ENCODE measurements at regions of chr9 and their contacts with region 1.

Region 1: DNA sequence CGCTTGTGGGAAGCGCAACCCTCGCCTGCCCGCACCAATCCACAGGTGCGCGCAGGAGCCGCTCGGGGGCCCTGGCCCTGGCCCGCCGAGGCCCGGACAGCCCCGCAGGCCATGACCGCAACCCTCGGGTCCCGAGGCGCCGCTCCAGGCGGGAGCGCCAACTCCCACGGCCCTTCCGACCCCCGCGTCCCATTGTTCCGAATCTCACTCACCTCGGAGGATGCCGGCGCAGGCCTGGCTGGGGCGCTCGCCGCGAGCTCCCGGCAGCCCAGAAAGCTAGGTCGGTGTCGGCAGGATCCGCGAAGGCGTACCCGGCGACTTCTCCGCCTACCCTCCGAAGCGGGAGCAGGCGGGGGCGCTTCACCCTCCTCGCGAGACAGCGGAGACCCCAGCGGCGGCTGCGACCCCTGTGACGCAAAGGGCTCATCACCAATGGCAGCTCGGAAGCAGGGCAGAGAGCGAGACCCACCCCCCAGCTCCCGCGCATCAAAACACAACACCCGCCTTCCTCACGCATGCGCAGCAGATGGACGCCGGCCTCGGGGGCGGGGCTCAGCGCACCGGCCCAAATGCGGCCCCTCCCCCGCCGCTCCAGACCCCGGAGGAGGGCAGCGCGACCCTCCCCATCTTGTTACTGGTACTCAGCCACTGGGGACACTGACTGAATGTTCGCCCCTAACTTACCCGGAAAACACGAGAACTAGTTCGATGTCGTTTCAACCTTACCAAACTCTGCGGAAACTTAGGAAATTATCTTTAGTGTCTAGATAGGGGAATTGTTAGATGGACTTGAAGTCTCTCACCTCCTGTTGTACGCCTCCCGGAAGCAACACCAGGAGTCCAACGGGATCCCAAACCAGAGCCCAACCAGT is 1.3 kb upstream of the SMIM27 start:
- DNase-seq: peak; percentile 92 to 98 (median 95)
- ATAC-seq: peak; percentile 80
- H3K4me3 ChIP-seq: peak overlapping the region; percentile 86
- H3K4me3 Mint-ChIP-seq: peak overlapping the region; percentile 95
- H3K27ac ChIP-seq: peak overlapping the region; percentile 96 to 97
- H3K27ac Mint-ChIP-seq: peak overlapping the region; percentile 99
- H3K4me1 ChIP-seq: peaks cover 30% of the 10 kb centered on the region
- H3K4me1 Mint-ChIP-seq: peaks cover 60% of the 10 kb centered on the region
- H3K27me3 ChIP-seq: no peaks in the 10 kb centered on the region
- H3K27me3 Mint-ChIP-seq: no peaks in the 10 kb centered on the region
- CTCF ChIP-seq: peak; percentile 50

Region 2: DNA sequence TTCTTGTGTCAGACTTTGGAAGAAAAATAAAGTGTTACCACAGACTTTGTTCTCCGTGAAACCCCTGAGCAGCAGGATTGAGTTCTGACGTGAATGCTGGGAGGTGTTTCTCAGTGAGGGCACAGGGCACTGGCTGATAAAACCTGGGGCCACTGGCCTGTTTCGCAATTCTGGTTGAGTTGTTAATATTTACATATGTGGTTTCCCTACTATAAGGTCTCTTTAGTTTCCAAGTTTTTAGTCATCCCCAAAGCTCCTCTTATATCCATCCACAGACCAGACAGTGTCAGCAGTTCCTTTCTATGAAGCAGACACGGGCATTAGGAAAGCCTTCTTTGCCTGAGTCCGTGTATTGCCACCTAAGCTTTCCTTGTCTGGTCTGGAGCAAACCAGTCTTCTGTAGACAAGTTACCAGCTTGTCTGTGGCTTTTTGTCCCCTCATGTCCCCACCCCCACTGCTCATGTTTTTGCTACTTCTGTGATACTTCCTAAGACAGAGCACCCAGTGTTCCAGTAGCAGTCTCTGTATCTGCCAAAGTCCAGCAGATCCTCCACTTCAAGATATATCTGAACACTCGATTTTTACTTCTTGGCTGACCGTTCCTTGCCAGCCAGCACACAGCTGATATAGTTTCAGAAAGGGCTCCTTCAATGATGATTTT is 124.4 kb before region 1 on chr9:
- CTCF ChIA-PET with region 1: no interaction called
- POLR2A ChIA-PET with region 1: no interaction called
- intact Hi-C with region 1: no loop called
- DNase-seq: no peak
- ATAC-seq: no peak
- H3K4me3 ChIP-seq: no peak overlapping the region
- H3K4me3 Mint-ChIP-seq: no peak overlapping the region
- H3K27ac ChIP-seq: no peak overlapping the region
- H3K27ac Mint-ChIP-seq: no peak overlapping the region
- H3K4me1 ChIP-seq: no peaks in the 10 kb centered on the region
- H3K4me1 Mint-ChIP-seq: no peaks in the 10 kb centered on the region
- H3K27me3 ChIP-seq: no peaks in the 10 kb centered on the region
- H3K27me3 Mint-ChIP-seq: no peaks in the 10 kb centered on the region
- CTCF ChIP-seq: no peak

Region 3: DNA sequence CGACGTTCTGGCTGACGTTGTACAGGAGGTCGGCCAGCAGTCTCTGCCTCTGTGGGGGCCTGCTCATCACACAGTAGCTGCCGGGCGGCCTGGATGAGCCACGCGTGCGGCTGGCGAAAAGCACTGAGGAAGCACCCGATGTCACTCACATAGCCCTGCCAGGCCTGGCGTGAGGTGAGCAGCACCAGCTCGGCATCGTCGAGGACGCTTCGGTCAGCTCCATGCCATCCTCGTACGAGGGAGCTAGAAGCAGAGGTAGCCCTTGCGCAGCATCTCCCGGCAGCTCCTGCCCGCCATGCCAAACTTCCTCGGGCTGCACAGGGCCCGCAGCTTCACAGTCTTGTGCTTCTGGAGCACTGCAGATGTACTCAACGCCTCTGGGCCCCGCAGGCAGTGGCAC is 16.0 kb after region 1 on chr9:
- CTCF ChIA-PET with region 1: interaction called, 45 read pairs
- POLR2A ChIA-PET with region 1: interaction called, 77 read pairs
- intact Hi-C with region 1: no loop called
- DNase-seq: no peak
- ATAC-seq: no peak
- H3K4me3 ChIP-seq: no peak overlapping the region
- H3K4me3 Mint-ChIP-seq: no peak overlapping the region
- H3K27ac ChIP-seq: no peak overlapping the region
- H3K27ac Mint-ChIP-seq: no peak overlapping the region
- H3K4me1 ChIP-seq: no peaks in the 10 kb centered on the region
- H3K4me1 Mint-ChIP-seq: peaks cover 28% of the 10 kb centered on the region
- H3K27me3 ChIP-seq: no peaks in the 10 kb centered on the region
- H3K27me3 Mint-ChIP-seq: no peaks in the 10 kb centered on the region
- CTCF ChIP-seq: no peak

Region 4: GRCh38 chr9:32571969-32572899 is 21.4 kb after region 1 on chr9:
- CTCF ChIA-PET with region 1: interaction called, 45 read pairs
- POLR2A ChIA-PET with region 1: interaction called, 77 read pairs
- intact Hi-C with region 1: loop called in 1 of 2 experiments (anchors 1 kb)
- DNase-seq: peak; percentile 44 to 92 (median 68)
- ATAC-seq: peak; percentile 84
- H3K4me3 ChIP-seq: peak overlapping the region; percentile 74
- H3K4me3 Mint-ChIP-seq: peak overlapping the region; percentile 99
- H3K27ac ChIP-seq: peak overlapping the region; percentile 74 to 87
- H3K27ac Mint-ChIP-seq: peak overlapping the region; percentile 97
- H3K4me1 ChIP-seq: peaks cover 5% of the 10 kb centered on the region
- H3K4me1 Mint-ChIP-seq: peaks cover 42% of the 10 kb centered on the region
- H3K27me3 ChIP-seq: no peaks in the 10 kb centered on the region
- H3K27me3 Mint-ChIP-seq: no peaks in the 10 kb centered on the region
- CTCF ChIP-seq: peak; percentile 81